ENCODE measurements at regions of chr6 and their contacts with region 1.

Region 1: GRCh38 chr6:138987640-138988468 is at the start of gene REPS1:
- DNase-seq: peak; percentile 90 to 94
- ATAC-seq: peak; percentile 88 to 96 (median 90)
- H3K4me3 ChIP-seq: peak within 1 kb of the TSS; percentile 96
- H3K4me3 Mint-ChIP-seq: peak within 1 kb of the TSS; percentile 88
- H3K27ac ChIP-seq: peak within 1 kb of the TSS; percentile 88
- H3K27ac Mint-ChIP-seq: peak within 1 kb of the TSS in 1 of 2 donors; percentile 94
- H3K4me1 ChIP-seq: peaks cover 15% of the 10 kb centered on the region
- H3K4me1 Mint-ChIP-seq: no peaks in the 10 kb centered on the region
- H3K27me3 ChIP-seq: no peaks in the 10 kb centered on the region
- H3K27me3 Mint-ChIP-seq: no peaks in the 10 kb centered on the region
- CTCF ChIP-seq: peak; percentile 98
- total RNA-seq, gene REPS1: 59.9 to 80.4 (median 66.4) TPM

Region 2: DNA sequence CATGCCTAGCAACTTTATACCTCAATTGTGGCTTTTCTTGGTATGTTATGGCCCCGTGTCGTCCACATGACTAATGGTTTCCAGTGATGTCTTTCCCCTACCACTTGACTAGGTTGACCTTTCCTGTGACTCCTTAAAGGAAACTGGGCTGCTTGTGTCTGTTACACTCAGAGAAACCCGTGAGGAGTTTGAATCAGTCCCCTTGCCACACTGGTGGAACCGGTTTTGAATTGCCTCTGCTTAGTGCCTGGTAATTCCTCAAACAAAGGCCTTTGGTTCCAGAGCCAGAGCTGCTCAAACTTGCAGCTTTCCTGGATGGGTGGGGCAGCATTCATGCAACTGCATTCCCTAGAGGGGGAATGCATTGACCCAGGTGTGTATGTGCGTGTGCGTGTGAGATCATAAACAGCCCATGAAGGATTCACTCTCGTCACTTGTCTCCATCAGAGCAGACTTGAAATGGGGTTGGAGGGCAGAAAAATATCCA is 170.0 kb before region 1 on chr6:
- intact Hi-C with region 1: loop called (anchors 1 kb)
- DNase-seq: no peak
- ATAC-seq: no peak
- H3K4me3 ChIP-seq: no peak overlapping the region
- H3K4me3 Mint-ChIP-seq: no peak overlapping the region
- H3K27ac ChIP-seq: no peak overlapping the region
- H3K27ac Mint-ChIP-seq: no peak overlapping the region
- H3K4me1 ChIP-seq: no peaks in the 10 kb centered on the region
- H3K4me1 Mint-ChIP-seq: no peaks in the 10 kb centered on the region
- H3K27me3 ChIP-seq: no peaks in the 10 kb centered on the region
- H3K27me3 Mint-ChIP-seq: peaks cover 3 to 7% of the 10 kb centered on the region in 2 donors
- CTCF ChIP-seq: no peak

Region 3: DNA sequence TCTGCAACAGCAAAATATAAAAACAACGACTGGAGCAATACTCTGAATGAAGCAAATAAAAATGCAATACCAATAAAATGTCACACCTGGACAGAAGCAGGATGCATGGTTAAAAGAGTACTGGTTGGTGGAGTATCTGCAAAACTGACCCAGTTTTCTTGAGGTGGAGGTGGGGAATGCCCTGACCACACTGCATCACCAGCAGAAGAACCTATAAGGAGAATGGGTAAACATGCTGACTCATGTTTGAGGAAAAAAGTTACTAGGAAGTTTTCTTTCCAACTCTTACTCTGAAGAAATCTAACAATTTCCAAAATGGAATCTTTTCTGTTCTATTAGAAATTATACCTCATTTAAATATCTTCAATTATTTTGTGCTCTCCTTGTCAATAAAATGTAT is 43.4 kb before region 1 on chr6:
- intact Hi-C with region 1: loop called (anchors 2 kb)
- DNase-seq: peak in 1 of 2 donors; percentile 67
- ATAC-seq: peak; percentile 79 to 96 (median 83)
- H3K4me3 ChIP-seq: no peak overlapping the region
- H3K4me3 Mint-ChIP-seq: peak overlapping the region; percentile 17
- H3K27ac ChIP-seq: peak overlapping the region; percentile 8
- H3K27ac Mint-ChIP-seq: peak overlapping the region; percentile 24 to 73
- H3K4me1 ChIP-seq: peaks cover 4% of the 10 kb centered on the region
- H3K4me1 Mint-ChIP-seq: peaks cover 37 to 42% of the 10 kb centered on the region in 2 donors
- H3K27me3 ChIP-seq: no peaks in the 10 kb centered on the region
- H3K27me3 Mint-ChIP-seq: peaks cover 0 to 2% of the 10 kb centered on the region in 2 donors
- CTCF ChIP-seq: no peak

Region 4: GRCh38 chr6:138972226-138972665 is 15.6 kb before region 1 on chr6:
- intact Hi-C with region 1: loop called (anchors 2 kb)
- DNase-seq: no peak
- ATAC-seq: no peak
- H3K4me3 ChIP-seq: no peak overlapping the region
- H3K4me3 Mint-ChIP-seq: no peak overlapping the region
- H3K27ac ChIP-seq: no peak overlapping the region
- H3K27ac Mint-ChIP-seq: peak overlapping the region in 1 of 2 donors; percentile 64
- H3K4me1 ChIP-seq: peaks cover 17% of the 10 kb centered on the region
- H3K4me1 Mint-ChIP-seq: peaks cover 65 to 67% of the 10 kb centered on the region in 2 donors
- H3K27me3 ChIP-seq: no peaks in the 10 kb centered on the region
- H3K27me3 Mint-ChIP-seq: no peaks in the 10 kb centered on the region
- CTCF ChIP-seq: no peak

Region 5: GRCh38 chr6:139027620-139028182 is 39.8 kb after region 1 on chr6:
- intact Hi-C with region 1: no loop called
- DNase-seq: peak in 1 of 2 donors; percentile 67
- ATAC-seq: peak in 1 of 3 donors; percentile 31
- H3K4me3 ChIP-seq: peak overlapping the region; percentile 99
- H3K4me3 Mint-ChIP-seq: no peak overlapping the region
- H3K27ac ChIP-seq: peak overlapping the region; percentile 91
- H3K27ac Mint-ChIP-seq: peak overlapping the region in 1 of 2 donors; percentile 65
- H3K4me1 ChIP-seq: peaks cover 23% of the 10 kb centered on the region
- H3K4me1 Mint-ChIP-seq: peaks cover 20 to 22% of the 10 kb centered on the region in 2 donors
- H3K27me3 ChIP-seq: no peaks in the 10 kb centered on the region
- H3K27me3 Mint-ChIP-seq: no peaks in the 10 kb centered on the region
- CTCF ChIP-seq: no peak

Region 6: GRCh38 chr6:139134817-139135581 is 147.1 kb after region 1 on chr6 and contains the start of gene HECA:
- intact Hi-C with region 1: loop called (anchors 2 kb)
- DNase-seq: peak; percentile 99 to 100
- ATAC-seq: peak; percentile 82 to 95 (median 87)
- H3K4me3 ChIP-seq: peak within 1 kb of the TSS; percentile 84
- H3K4me3 Mint-ChIP-seq: peak within 1 kb of the TSS; percentile 88
- H3K27ac ChIP-seq: peak within 1 kb of the TSS; percentile 97
- H3K27ac Mint-ChIP-seq: peak within 1 kb of the TSS; percentile 98
- H3K4me1 ChIP-seq: peaks cover 34% of the 10 kb centered on the region
- H3K4me1 Mint-ChIP-seq: peaks cover 55 to 71% of the 10 kb centered on the region in 2 donors
- H3K27me3 ChIP-seq: no peaks in the 10 kb centered on the region
- H3K27me3 Mint-ChIP-seq: no peaks in the 10 kb centered on the region
- CTCF ChIP-seq: no peak
- total RNA-seq, gene HECA: 76.5 to 80.5 (median 77.6) TPM

Region 7: DNA sequence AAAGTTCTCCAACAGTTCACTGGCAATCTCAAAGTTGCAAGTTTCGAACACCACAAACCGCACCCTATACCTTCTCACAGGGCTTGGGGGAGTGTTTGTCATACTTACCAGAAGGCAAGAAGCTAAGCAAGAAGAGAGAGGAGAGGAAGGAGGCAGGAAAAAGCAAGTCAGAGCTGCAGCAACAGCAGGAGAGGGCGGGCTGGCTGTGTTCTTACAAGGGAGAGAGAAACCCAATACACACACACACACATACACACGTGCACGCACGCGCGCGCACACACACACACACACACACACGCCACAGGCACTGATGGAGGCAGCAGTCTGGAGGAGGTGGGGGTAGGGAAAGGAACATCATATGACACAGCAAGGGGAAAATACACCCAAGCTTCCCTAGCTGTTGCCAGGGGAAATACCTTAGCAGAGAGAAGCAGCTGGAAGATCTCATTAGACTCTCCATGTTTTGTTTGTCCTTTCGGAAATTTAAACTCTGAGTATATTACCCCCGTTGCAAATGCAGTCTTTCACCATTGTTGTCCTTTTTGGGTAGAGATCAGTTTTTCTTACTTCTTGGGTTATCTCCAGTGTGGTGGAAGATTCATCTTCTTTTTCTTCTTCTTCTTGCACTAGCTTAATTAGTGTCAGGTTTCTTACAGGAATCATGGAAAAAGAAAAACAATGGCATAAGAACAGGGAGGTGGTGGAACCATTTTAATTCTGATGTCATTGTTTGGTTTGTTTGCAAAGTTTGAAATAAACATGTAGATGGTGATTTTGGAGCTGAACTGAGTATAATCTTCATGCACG is 304.2 kb after region 1 on chr6 and contains the start of gene TXLNB:
- intact Hi-C with region 1: loop called (anchors 5 kb)
- DNase-seq: peak; percentile 64 to 89
- ATAC-seq: peak; percentile 76 to 86 (median 80)
- H3K4me3 ChIP-seq: peak within 1 kb of the TSS; percentile 14
- H3K4me3 Mint-ChIP-seq: peak within 1 kb of the TSS; percentile 96
- H3K27ac ChIP-seq: peak within 1 kb of the TSS; percentile 97
- H3K27ac Mint-ChIP-seq: peak within 1 kb of the TSS; percentile 93 to 99
- H3K4me1 ChIP-seq: peaks cover 28% of the 10 kb centered on the region
- H3K4me1 Mint-ChIP-seq: peaks cover 34 to 46% of the 10 kb centered on the region in 2 donors
- H3K27me3 ChIP-seq: no peaks in the 10 kb centered on the region
- H3K27me3 Mint-ChIP-seq: no peaks in the 10 kb centered on the region
- CTCF ChIP-seq: no peak
- total RNA-seq, gene TXLNB: 0.24 to 0.93 (median 0.50) TPM

Region 8: GRCh38 chr6:139364302-139364981 is 376.6 kb after region 1 on chr6:
- intact Hi-C with region 1: loop called (anchors 5 kb)
- DNase-seq: peak in 1 of 2 donors; percentile 76
- ATAC-seq: peak; percentile 75 to 78 (median 76)
- H3K4me3 ChIP-seq: no peak overlapping the region
- H3K4me3 Mint-ChIP-seq: no peak overlapping the region
- H3K27ac ChIP-seq: no peak overlapping the region
- H3K27ac Mint-ChIP-seq: peak overlapping the region; percentile 3 to 64
- H3K4me1 ChIP-seq: peaks cover 3% of the 10 kb centered on the region
- H3K4me1 Mint-ChIP-seq: peaks cover 33 to 36% of the 10 kb centered on the region in 2 donors
- H3K27me3 ChIP-seq: no peaks in the 10 kb centered on the region
- H3K27me3 Mint-ChIP-seq: no peaks in the 10 kb centered on the region
- CTCF ChIP-seq: peak; percentile 90

Measured in natural killer cell (primary cell).